Heart left ventricle (tissue), 16 donors: ENCODE measurements at regions of chr12 and their contacts with region 1.

Region 1: GRCh38 chr12:54324617-54325441 is at the start of gene COPZ1:
- DNase-seq: peak; percentile 94 to 95 (median 95)
- ATAC-seq: peak; percentile 98 to 99 (median 98)
- H3K4me3 ChIP-seq: peak within 1 kb of the TSS; percentile 51 to 85 (median 75)
- H3K27ac ChIP-seq: peak within 1 kb of the TSS; percentile 50 to 88 (median 83)
- H3K4me1 ChIP-seq: peaks cover 0 to 47% (median 30%) of the 10 kb centered on the region in 12 donors
- H3K27me3 ChIP-seq: no peaks in the 10 kb centered on the region
- CTCF ChIP-seq: peak; percentile 58 to 88 (median 82)
- POLR2A ChIP-seq: peak in 1 of 2 donors; percentile 50
- total RNA-seq, gene COPZ1: 112 to 146 (median 125) TPM

Region 2: GRCh38 chr12:54220092-54220557 is 104.7 kb before region 1 on chr12:
- intact Hi-C with region 1: loop called in 2 of 10 experiments (anchors 1 to 5 kb)
- DNase-seq: peak in 4 of 5 donors; percentile 49 to 66 (median 56)
- ATAC-seq: peak in 3 of 4 donors; percentile 62 to 72 (median 72)
- H3K4me3 ChIP-seq: peak overlapping the region in 1 of 12 donors; percentile 7
- H3K27ac ChIP-seq: no peak overlapping the region
- H3K4me1 ChIP-seq: peaks cover 8 to 34% (median 19%) of the 10 kb centered on the region in 12 donors
- H3K27me3 ChIP-seq: peaks cover 0 to 18% (median 3%) of the 10 kb centered on the region in 9 donors
- CTCF ChIP-seq: peak; percentile 69 to 88 (median 75)
- POLR2A ChIP-seq: no peak

Region 3: DNA sequence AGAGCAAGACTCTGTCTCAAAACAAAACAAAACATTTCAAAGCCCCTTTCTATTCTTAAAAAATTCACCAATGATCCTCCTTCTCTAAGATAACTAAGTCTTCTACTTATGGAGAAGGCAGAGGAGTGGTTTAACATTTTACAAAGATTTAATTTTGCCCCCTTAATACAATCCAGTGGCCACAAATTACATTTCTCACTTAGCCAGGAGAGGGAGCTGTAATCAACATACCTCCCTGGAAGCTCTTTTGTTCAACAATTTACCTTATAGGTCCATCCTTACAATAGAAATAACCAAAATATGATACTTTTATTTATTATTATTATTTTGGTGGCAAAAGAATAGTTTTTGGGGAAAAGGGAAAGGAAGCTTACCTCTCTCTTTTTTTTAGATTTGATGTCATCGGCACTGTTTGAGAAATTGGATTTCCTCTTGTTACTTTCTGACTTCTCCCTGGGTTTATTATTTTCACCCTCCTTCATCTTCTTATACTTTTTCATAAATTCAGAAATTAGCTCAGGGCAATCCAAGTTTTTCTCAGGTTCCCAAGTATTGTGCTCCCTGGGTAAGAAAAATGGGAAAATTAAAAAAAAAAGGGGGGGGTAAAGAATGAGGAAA is 73.1 kb before region 1 on chr12:
- intact Hi-C with region 1: loop called in 4 of 10 experiments (anchors 2 to 10 kb)
- DNase-seq: no peak
- ATAC-seq: peak in 2 of 4 donors; percentile 32 to 48
- H3K4me3 ChIP-seq: no peak overlapping the region
- H3K27ac ChIP-seq: no peak overlapping the region
- H3K4me1 ChIP-seq: peaks cover 0 to 17% (median 11%) of the 10 kb centered on the region in 12 donors
- H3K27me3 ChIP-seq: no peaks in the 10 kb centered on the region
- CTCF ChIP-seq: peak; percentile 46 to 71 (median 62)
- POLR2A ChIP-seq: no peak

Region 4: DNA sequence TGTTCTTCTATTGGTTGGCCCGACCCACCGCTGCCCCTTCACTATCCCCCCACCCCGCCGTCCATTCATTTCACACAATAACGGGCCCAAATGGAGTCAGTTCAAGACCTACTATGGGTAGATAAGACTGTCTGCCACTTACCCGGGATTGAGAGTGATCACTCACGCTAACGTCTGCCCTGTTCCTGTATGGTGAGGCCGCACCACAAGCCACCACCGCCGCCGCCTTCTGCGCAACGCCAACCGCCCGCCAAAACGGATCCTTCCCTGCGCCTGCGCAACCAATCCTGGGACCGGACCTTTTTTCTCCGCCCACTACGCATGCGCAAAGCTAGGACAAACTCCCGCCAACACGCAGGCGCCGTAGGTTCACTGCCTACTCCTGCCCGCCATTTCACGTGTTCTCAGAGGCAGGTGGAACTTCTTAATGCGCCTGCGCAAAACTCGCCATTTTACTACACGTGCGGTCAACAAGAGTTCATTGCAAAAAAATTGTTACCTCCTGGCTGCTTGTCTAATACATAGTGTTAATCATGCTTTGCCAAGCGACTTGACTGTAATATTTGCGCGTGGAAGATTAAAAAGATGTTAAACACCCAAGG is 44.9 kb before region 1 on chr12 and contains the start of gene CBX5:
- intact Hi-C with region 1: loop called in 3 of 10 experiments (anchors 1 to 2 kb)
- DNase-seq: peak; percentile 99 to 100 (median 99)
- ATAC-seq: peak; percentile 70 to 82 (median 77)
- H3K4me3 ChIP-seq: peak within 1 kb of the TSS; percentile 61 to 93 (median 79)
- H3K27ac ChIP-seq: peak within 1 kb of the TSS; percentile 82 to 99 (median 94)
- H3K4me1 ChIP-seq: peaks cover 9 to 60% (median 50%) of the 10 kb centered on the region in 12 donors
- H3K27me3 ChIP-seq: no peaks in the 10 kb centered on the region
- CTCF ChIP-seq: no peak
- POLR2A ChIP-seq: no peak
- total RNA-seq, gene CBX5: 22.3 to 59.5 (median 49.4) TPM

Region 5: DNA sequence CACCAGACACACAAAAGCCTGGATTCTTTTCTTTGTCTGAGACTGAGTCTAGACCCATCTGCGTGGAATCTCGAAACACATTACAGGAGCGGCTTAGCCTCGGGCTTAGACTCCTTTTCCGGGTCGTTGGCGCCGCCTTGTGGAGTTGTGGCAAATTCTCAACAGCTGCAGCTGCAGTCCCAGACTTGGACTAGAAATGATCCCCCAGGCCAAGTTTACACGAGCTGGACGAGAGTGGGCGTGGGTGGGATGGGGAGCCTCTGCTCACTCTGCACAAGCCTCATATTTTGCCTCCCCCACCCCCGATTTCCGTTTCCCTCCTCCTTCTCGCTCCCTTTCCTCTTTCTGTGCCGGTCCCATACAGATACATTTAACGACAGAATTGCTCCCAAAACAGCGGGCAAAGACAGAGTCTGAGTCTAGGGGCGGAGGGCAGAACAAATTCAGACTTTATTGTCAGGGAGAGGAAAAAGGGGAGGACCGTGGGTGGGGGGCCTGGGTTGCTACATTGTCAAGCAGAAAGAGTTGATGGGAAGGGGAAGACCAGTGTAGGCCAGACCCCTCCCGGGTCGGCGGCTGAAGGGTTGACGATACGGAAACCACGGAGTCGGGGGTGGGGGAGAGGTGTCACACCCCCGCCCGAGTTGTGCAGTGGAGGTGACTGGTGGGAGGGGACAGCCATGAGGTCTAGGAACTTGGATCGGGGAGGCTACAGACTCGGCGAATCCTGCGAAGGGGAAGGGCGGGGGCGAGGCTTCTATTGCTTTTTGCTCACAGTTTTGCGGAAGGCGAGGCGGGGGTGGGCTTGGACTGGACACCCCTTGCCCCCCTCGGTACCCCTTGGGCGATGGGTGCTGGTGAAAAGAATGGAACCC is 44.1 kb after region 1 on chr12:
- intact Hi-C with region 1: loop called in 3 of 10 experiments (anchors 1 to 5 kb)
- DNase-seq: peak; percentile 90 to 94 (median 91)
- ATAC-seq: peak; percentile 56 to 76 (median 66)
- H3K4me3 ChIP-seq: peak overlapping the region in 11 of 12 donors; percentile 26 to 62 (median 50)
- H3K27ac ChIP-seq: peak overlapping the region in 10 of 12 donors; percentile 64 to 84 (median 76)
- H3K4me1 ChIP-seq: peaks cover 0 to 67% (median 35%) of the 10 kb centered on the region in 12 donors
- H3K27me3 ChIP-seq: no peaks in the 10 kb centered on the region
- CTCF ChIP-seq: peak; percentile 68 to 87 (median 80)
- POLR2A ChIP-seq: no peak

Region 6: GRCh38 chr12:54419088-54419892 is 94.5 kb after region 1 on chr12 and contains the start of gene ITGA5:
- intact Hi-C with region 1: no loop called
- DNase-seq: peak; percentile 86 to 90 (median 88)
- ATAC-seq: peak; percentile 46 to 81 (median 78)
- H3K4me3 ChIP-seq: peak within 1 kb of the TSS; percentile 67 to 97 (median 88)
- H3K27ac ChIP-seq: peak within 1 kb of the TSS; percentile 85 to 99 (median 96)
- H3K4me1 ChIP-seq: peaks cover 4 to 77% (median 54%) of the 10 kb centered on the region in 12 donors
- H3K27me3 ChIP-seq: no peaks in the 10 kb centered on the region
- CTCF ChIP-seq: no peak
- POLR2A ChIP-seq: peak in 1 of 2 donors; percentile 95
- total RNA-seq, gene ITGA5: 41.6 to 128 (median 55.0) TPM